PC-9 (cell line): ENCODE measurements at regions of chr6 and their contacts with region 1.

Region 1: GRCh38 chr6:56359201-56359899 is 112.0 kb upstream of the COL21A1 start:
- DNase-seq: peak; percentile 41 to 51
- H3K4me3 ChIP-seq: no peak overlapping the region
- H3K27ac ChIP-seq: no peak overlapping the region
- H3K4me1 ChIP-seq: 0 out of 2 replicates have a peak, but pooled peaks cover 2% of the 10 kb centered on the region
- H3K27me3 ChIP-seq: no peaks in the 10 kb centered on the region
- CTCF ChIP-seq: peak; percentile 88

Region 2: GRCh38 chr6:56314683-56315523 is 44.4 kb before region 1 on chr6:
- CTCF ChIA-PET with region 1: interaction called, 3 read pairs
- POLR2A ChIA-PET with region 1: no interaction called
- intact Hi-C with region 1: loop called (anchors 2 kb)
- DNase-seq: peak in 1 of 2 experiments; percentile 29
- H3K4me3 ChIP-seq: no peak overlapping the region
- H3K27ac ChIP-seq: no peak overlapping the region
- H3K4me1 ChIP-seq: no peaks in the 10 kb centered on the region
- H3K27me3 ChIP-seq: no peaks in the 10 kb centered on the region
- CTCF ChIP-seq: peak; percentile 87

Region 3: DNA sequence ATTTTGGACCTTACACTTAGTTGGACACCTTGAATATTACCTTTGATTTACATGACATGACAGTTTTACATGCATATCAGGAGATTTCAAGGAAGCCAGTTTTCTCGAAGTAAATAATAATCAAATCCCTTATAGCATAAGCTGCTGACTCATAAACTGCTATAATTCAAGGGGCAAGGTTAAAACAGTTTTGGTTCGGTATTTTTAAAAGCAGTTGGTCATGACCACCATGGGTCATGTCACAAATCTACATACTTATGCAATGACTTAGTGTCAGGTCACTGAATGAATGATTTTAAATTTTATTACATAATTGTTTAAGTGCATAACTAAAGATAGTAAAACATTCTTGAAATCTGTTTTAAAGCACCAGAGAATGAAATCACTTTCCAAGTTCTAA is 125.3 kb after region 1 on chr6:
- CTCF ChIA-PET with region 1: no interaction called
- POLR2A ChIA-PET with region 1: no interaction called
- intact Hi-C with region 1: loop called (anchors 5 kb)
- DNase-seq: no peak
- H3K4me3 ChIP-seq: no peak overlapping the region
- H3K27ac ChIP-seq: no peak overlapping the region
- H3K4me1 ChIP-seq: no peaks in the 10 kb centered on the region
- H3K27me3 ChIP-seq: no peaks in the 10 kb centered on the region
- CTCF ChIP-seq: no peak

Region 4: GRCh38 chr6:56570413-56571359 is 211.3 kb after region 1 on chr6:
- CTCF ChIA-PET with region 1: no interaction called
- POLR2A ChIA-PET with region 1: interaction called, 3 read pairs
- intact Hi-C with region 1: loop called (anchors 1 kb)
- DNase-seq: no peak
- H3K4me3 ChIP-seq: no peak overlapping the region
- H3K27ac ChIP-seq: no peak overlapping the region
- H3K4me1 ChIP-seq: no peaks in the 10 kb centered on the region
- H3K27me3 ChIP-seq: no peaks in the 10 kb centered on the region
- CTCF ChIP-seq: peak; percentile 71

Region 5: GRCh38 chr6:56595490-56596122 is 236.3 kb after region 1 on chr6:
- CTCF ChIA-PET with region 1: no interaction called
- POLR2A ChIA-PET with region 1: no interaction called
- intact Hi-C with region 1: loop called (anchors 1 kb)
- DNase-seq: peak; percentile 5 to 43
- H3K4me3 ChIP-seq: no peak overlapping the region
- H3K27ac ChIP-seq: no peak overlapping the region
- H3K4me1 ChIP-seq: no peaks in the 10 kb centered on the region
- H3K27me3 ChIP-seq: no peaks in the 10 kb centered on the region
- CTCF ChIP-seq: peak; percentile 81